ENCODE measurements at regions of chr2 and their contacts with region 1.

Region 1: DNA sequence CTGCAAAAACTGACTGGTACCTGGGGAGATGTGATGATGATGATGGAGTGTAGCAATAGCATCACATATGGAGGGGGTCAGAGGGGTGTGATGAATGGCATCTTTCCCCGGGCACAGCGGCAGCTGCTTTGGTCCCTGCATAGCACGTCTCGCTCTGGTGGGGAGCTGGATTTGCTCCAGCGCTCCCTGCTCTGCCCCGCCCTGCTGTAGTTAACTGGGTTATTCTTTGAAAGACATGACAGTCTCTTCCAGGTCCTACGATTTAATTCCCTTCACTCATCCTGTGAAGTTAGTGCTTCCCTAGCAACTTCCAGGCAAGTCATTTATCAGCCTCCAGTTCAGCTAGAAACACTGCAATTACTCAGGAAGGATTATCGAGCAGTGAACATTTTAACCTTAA is 463.1 kb downstream of the TSN start:
- DNase-seq: no peak
- H3K4me3 ChIP-seq: no peak overlapping the region
- H3K4me3 Mint-ChIP-seq: no peak overlapping the region
- H3K27ac Mint-ChIP-seq: no peak overlapping the region
- H3K4me1 ChIP-seq: no peaks in the 10 kb centered on the region
- H3K4me1 Mint-ChIP-seq: no peaks in the 10 kb centered on the region
- H3K27me3 ChIP-seq: no peaks in the 10 kb centered on the region
- H3K27me3 Mint-ChIP-seq: peaks cover 15% of the 10 kb centered on the region
- CTCF ChIP-seq: no peak

Region 2: DNA sequence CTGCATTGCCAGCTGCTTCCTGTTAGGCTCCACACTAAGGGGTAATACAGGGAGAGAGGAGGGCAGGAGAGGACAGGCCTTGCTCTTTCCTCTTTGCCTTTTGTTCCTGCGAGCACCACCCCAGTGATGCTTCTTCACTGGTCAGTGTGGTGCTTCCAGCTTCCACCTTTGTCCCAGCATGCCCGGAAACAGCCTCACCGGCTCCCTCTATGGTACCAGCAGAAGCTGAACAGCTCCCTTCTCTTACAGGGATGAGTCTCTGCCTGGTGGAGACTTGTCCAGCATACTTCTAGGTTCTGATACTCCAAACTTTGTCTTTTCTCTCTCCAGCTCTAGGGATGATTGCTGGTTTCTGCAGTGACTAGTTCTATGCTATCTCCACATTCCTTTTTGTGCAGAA is 49.8 kb before region 1 on chr2:
- CTCF ChIA-PET with region 1: interaction called, 10 read pairs
- POLR2A ChIA-PET with region 1: no interaction called
- intact Hi-C with region 1: no loop called
- DNase-seq: peak; percentile 24 to 40
- H3K4me3 ChIP-seq: no peak overlapping the region
- H3K4me3 Mint-ChIP-seq: no peak overlapping the region
- H3K27ac Mint-ChIP-seq: no peak overlapping the region
- H3K4me1 ChIP-seq: no peaks in the 10 kb centered on the region
- H3K4me1 Mint-ChIP-seq: no peaks in the 10 kb centered on the region
- H3K27me3 ChIP-seq: peaks cover 1% of the 10 kb centered on the region; the same call in 1 of the 2 replicates
- H3K27me3 Mint-ChIP-seq: peaks cover 6% of the 10 kb centered on the region
- CTCF ChIP-seq: no peak

Measured in Caco-2 (cell line).